T-cell (primary cell): ENCODE measurements at regions of chr1 and their contacts with region 1.

Region 1: DNA sequence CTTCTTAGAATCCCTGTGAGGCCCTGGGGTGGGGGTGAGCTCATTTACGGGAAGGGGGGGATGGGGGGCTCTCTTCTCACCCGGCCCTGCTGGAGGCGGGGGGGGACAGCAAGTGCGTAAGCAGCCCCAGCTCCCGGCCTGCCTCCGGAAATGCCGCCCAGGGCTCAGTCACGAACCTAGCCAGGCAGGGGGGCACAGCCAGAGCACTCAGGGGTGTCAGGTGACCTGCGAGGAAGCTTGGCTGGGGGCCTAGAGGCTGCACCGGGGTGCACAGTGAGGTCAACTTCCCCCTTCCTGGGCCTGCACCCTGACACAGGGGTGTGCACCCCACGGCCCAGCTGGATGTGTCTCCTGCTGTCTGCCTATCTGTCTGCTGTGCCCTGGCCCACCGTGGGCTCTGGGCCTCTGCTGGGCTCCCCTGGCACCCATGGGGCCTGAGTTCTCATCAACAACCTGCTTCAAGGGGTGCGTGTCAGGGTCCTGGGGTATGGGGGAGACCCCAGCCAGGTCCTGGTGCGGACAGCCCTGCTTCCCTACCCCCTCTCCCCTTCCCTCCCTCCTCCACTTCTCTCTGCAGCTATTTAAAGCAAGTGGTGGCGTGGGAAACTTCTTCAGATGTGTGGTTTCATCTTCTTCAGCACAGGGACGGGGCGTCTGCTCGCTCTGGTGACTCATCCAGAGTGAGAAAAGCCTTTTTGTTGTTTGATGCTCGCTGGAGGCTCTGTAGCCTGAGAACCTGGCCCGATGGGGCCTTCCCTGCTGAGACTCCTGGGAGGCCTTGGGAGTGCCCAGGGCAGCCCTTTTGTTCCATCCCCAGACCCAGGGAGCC is 92.5 kb upstream of the RUNX3 start:
- DNase-seq: peak; percentile 79 to 99 (median 96)
- ATAC-seq: peak; percentile 87 to 90 (median 88)
- H3K4me3 ChIP-seq: peak overlapping the region; percentile 39 to 41
- H3K4me3 Mint-ChIP-seq: peak overlapping the region; percentile 67 to 77 (median 70)
- H3K27ac ChIP-seq: peak overlapping the region; percentile 100
- H3K27ac Mint-ChIP-seq: peak overlapping the region; percentile 95 to 98
- H3K4me1 ChIP-seq: peaks cover 41 to 100% of the 10 kb centered on the region in 2 experiments
- H3K4me1 Mint-ChIP-seq: peaks cover 72 to 89% (median 89%) of the 10 kb centered on the region in 3 donors
- H3K27me3 ChIP-seq: no peaks in the 10 kb centered on the region
- H3K27me3 Mint-ChIP-seq: no peaks in the 10 kb centered on the region

Region 2: DNA sequence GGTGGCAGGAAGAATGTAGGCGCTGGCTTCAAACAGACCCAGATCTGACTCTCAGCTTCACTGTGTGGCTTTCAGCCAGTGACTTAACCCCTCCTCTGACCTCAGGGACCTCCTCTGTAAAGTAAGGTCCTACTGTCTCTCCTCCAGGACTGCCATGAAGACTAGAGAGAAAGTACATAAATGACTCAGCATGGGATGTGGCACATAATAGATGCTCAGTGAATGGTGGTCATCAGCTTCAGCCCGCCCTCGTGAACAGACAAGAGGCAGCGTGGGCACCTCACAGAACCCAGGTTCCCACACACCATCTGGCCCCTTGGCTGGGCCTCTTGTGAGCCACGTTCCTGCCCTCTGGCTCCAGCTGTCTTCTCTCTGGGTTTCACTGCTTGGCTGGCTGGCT is 83.8 kb after region 1 on chr1:
- CTCF ChIA-PET with region 1: no interaction called
- POLR2A ChIA-PET with region 1: no interaction called
- DNase-seq: no peak
- ATAC-seq: peak in 1 of 4 experiments; percentile 24
- H3K4me3 ChIP-seq: no peak overlapping the region
- H3K4me3 Mint-ChIP-seq: no peak overlapping the region
- H3K27ac ChIP-seq: no peak overlapping the region
- H3K27ac Mint-ChIP-seq: no peak overlapping the region
- H3K4me1 ChIP-seq: peaks cover 12 to 41% of the 10 kb centered on the region in 2 experiments
- H3K4me1 Mint-ChIP-seq: peaks cover 23 to 32% (median 24%) of the 10 kb centered on the region in 3 donors
- H3K27me3 ChIP-seq: peaks cover 0 to 8% of the 10 kb centered on the region in 2 experiments
- H3K27me3 Mint-ChIP-seq: peaks cover 0 to 3% of the 10 kb centered on the region in 2 donors

Region 3: DNA sequence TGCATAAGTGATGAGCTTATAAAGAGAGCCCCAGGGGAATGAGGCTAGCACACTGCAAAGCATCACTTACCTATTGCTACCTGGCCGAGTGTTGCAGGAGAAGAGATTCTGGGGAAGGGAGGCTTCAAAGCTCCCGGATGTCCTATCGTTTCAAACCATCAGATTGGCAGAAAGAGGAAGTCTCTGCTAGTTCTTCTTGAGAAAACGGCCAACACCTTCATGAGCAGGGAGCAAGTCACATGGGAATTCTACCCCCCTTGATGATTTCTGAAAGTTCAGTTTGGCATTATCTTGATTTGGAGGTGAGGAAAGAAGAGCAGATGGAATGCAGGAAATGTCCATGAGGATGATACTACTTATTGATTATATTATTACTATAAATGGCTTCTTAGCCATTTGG is 193.5 kb after region 1 on chr1:
- CTCF ChIA-PET with region 1: interaction called in 1 of 2 experiments, 11 read pairs
- POLR2A ChIA-PET with region 1: no interaction called
- DNase-seq: no peak
- ATAC-seq: no peak
- H3K4me3 ChIP-seq: no peak overlapping the region
- H3K4me3 Mint-ChIP-seq: no peak overlapping the region
- H3K27ac ChIP-seq: no peak overlapping the region
- H3K27ac Mint-ChIP-seq: no peak overlapping the region
- H3K4me1 ChIP-seq: no peaks in the 10 kb centered on the region
- H3K4me1 Mint-ChIP-seq: peaks cover 5 to 10% (median 6%) of the 10 kb centered on the region in 3 donors
- H3K27me3 ChIP-seq: peaks cover 0 to 4% of the 10 kb centered on the region in 2 experiments
- H3K27me3 Mint-ChIP-seq: peaks cover 0 to 2% of the 10 kb centered on the region in 2 donors

Region 4: DNA sequence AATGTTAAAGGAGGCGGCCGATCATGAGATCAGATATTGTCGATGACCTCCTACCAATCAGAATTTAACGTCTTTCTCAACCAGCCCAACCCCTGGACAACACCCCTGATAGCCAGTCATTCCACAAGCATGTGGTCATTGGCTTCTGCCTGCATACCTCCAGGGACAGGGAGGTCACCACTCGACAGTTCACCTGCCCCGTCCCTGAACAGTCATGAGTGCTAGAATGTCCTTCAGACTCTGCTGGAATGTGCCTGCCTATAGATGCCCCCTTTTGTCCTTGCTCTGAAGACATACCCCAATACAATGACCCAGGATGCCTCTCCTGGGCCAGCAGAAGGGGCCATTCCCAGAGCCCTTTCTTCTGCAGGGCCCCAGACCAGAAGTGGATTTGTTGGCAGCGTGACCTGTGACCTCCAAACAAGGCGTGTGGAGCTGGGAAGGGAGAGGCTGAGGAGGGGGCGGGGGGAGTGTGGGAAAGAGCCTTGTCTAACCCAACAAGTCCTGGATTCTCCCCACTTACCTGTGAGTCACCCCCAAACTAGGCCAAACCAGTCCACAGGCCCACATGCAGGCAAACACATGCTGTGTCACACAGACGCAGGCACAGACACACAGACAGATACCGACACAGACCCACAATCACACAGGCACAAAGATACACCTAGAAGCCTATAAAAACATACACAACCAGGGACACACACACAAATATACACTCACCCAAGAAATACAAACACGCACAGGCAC is 1329.2 kb after region 1 on chr1:
- CTCF ChIA-PET with region 1: no interaction called
- POLR2A ChIA-PET with region 1: no interaction called
- DNase-seq: no peak
- ATAC-seq: no peak
- H3K4me3 ChIP-seq: no peak overlapping the region
- H3K4me3 Mint-ChIP-seq: no peak overlapping the region
- H3K27ac ChIP-seq: no peak overlapping the region
- H3K27ac Mint-ChIP-seq: no peak overlapping the region
- H3K4me1 ChIP-seq: no peaks in the 10 kb centered on the region
- H3K4me1 Mint-ChIP-seq: peaks cover 0 to 4% (median 0%) of the 10 kb centered on the region in 3 donors
- H3K27me3 ChIP-seq: peaks cover 0 to 8% of the 10 kb centered on the region in 2 experiments
- H3K27me3 Mint-ChIP-seq: no peaks in the 10 kb centered on the region